ENCODE measurements at regions of chr17 and their contacts with region 1.

Region 1: GRCh38 chr17:67376737-67377487 is at the start of gene PITPNC1:
- H3K4me3 ChIP-seq: peak within 1 kb of the TSS; percentile 85
- H3K27ac ChIP-seq: peak within 1 kb of the TSS; percentile 87
- H3K4me1 ChIP-seq: peaks cover 5% of the 10 kb centered on the region; the same call in 1 of the 2 replicates
- CTCF ChIP-seq: peak; percentile 58; the same call in 1 of the 2 replicates

Region 2: GRCh38 chr17:67260170-67261011 is 116.5 kb before region 1 on chr17:
- CTCF ChIA-PET with region 1: no interaction called
- POLR2A ChIA-PET with region 1: no interaction called
- H3K4me3 ChIP-seq: no peak overlapping the region
- H3K27ac ChIP-seq: no peak overlapping the region
- H3K4me1 ChIP-seq: 0 out of 2 replicates have a peak, but pooled peaks cover 3% of the 10 kb centered on the region
- CTCF ChIP-seq: no peak

Region 3: GRCh38 chr17:67390646-67391384 is 13.9 kb after region 1 on chr17:
- CTCF ChIA-PET with region 1: interaction called, 47 read pairs
- POLR2A ChIA-PET with region 1: no interaction called
- H3K4me3 ChIP-seq: no peak overlapping the region
- H3K27ac ChIP-seq: peak overlapping the region; percentile 34; the same call in 1 of the 2 replicates
- H3K4me1 ChIP-seq: peaks cover 11% of the 10 kb centered on the region
- CTCF ChIP-seq: no peak

Region 4: GRCh38 chr17:67575325-67575724 is 198.4 kb after region 1 on chr17:
- CTCF ChIA-PET with region 1: interaction called, 3 read pairs
- POLR2A ChIA-PET with region 1: interaction called, 11 read pairs
- H3K4me3 ChIP-seq: no peak overlapping the region
- H3K27ac ChIP-seq: no peak overlapping the region
- H3K4me1 ChIP-seq: no peaks in the 10 kb centered on the region
- CTCF ChIP-seq: no peak

Region 5: DNA sequence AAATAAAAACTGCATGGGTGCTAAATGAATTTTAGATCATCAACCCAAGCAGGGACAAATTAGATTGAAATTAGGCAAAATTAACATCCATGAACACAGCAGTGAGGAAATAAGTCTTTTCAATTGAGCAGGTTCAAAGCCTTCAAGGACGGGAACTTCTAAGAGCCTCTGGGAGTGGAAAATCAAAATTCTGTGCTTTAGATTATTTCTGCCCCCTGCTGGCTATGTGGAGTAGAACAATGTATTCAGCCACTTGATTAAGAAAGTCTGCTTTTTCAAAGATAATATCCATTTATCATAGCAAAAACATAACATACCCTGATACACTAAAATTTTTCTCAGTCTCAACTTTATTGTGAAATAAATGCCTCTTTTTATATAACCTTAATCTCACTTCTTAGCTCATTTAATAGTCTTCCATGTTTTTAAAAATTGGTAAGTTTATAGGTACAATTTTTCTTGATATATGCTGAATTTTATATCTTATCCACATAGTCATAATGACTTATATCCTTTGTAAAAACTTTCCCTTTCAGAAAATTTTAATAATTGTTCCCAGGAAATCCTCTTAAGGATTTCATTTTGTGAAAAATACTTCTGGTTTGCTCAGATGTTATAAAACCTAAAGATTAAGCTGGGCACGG is 312.7 kb after region 1 on chr17:
- CTCF ChIA-PET with region 1: interaction called, 32 read pairs
- POLR2A ChIA-PET with region 1: no interaction called
- H3K4me3 ChIP-seq: no peak overlapping the region
- H3K27ac ChIP-seq: no peak overlapping the region
- H3K4me1 ChIP-seq: no peaks in the 10 kb centered on the region
- CTCF ChIP-seq: no peak

Region 6: DNA sequence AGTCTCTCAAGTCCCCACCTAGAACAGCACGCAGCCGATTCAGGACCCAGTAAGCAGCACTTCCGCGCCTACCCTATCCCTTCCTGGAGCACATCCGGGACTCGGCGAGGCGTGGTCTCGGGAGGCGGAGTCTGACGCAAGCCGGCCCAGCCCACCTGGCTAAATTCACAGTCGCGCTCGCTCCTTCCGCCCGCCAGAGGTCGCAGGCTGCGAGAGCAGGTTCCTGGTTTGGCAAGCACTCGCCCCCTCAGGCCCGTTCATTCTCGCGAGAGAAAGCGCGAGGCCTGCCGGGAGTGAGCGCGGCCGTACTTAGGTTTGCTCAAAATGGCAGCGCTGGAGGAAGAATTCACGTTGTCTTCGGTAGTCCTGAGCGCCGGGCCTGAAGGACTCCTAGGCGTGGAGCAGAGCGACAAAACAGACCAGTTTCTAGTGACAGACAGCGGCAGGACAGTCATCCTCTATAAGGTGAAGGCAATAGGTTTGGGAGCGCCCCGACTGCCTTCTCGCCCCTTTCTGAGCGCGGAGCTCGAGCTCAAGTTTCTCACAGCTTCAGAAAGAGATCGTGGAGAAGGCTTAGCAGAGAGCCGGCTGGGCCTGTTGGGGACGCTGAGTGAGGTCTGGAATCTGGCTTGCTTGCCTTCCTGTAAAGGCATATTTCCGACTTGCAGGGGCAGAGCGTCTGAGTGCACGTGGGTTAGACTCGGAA is 340.9 kb after region 1 on chr17 and contains the start of gene NOL11:
- CTCF ChIA-PET with region 1: interaction called, 18 read pairs
- POLR2A ChIA-PET with region 1: interaction called, 12 read pairs
- H3K4me3 ChIP-seq: peak within 1 kb of the TSS; percentile 66
- H3K27ac ChIP-seq: peak within 1 kb of the TSS; percentile 90
- H3K4me1 ChIP-seq: peaks cover 12% of the 10 kb centered on the region; the same call in 1 of the 2 replicates
- CTCF ChIP-seq: peak; percentile 99

Measured in HEK293 (cell line).